CD4-positive, alpha-beta memory T cell (primary cell): ENCODE measurements at regions of chr7 and their contacts with region 1.

Region 1: GRCh38 chr7:2471396-2471795 is 4.8 kb downstream of the GRIFIN start:
- DNase-seq: no peak
- H3K4me3 ChIP-seq: no peak overlapping the region
- H3K4me3 Mint-ChIP-seq: no peak overlapping the region
- H3K27ac ChIP-seq: no peak overlapping the region
- H3K27ac Mint-ChIP-seq: no peak overlapping the region
- H3K4me1 ChIP-seq: no peaks in the 10 kb centered on the region
- H3K4me1 Mint-ChIP-seq: peaks cover 2 to 5% (median 4%) of the 10 kb centered on the region in 4 donors
- H3K27me3 ChIP-seq: no peaks in the 10 kb centered on the region
- H3K27me3 Mint-ChIP-seq: peaks cover 2 to 5% of the 10 kb centered on the region in 2 donors

Region 2: DNA sequence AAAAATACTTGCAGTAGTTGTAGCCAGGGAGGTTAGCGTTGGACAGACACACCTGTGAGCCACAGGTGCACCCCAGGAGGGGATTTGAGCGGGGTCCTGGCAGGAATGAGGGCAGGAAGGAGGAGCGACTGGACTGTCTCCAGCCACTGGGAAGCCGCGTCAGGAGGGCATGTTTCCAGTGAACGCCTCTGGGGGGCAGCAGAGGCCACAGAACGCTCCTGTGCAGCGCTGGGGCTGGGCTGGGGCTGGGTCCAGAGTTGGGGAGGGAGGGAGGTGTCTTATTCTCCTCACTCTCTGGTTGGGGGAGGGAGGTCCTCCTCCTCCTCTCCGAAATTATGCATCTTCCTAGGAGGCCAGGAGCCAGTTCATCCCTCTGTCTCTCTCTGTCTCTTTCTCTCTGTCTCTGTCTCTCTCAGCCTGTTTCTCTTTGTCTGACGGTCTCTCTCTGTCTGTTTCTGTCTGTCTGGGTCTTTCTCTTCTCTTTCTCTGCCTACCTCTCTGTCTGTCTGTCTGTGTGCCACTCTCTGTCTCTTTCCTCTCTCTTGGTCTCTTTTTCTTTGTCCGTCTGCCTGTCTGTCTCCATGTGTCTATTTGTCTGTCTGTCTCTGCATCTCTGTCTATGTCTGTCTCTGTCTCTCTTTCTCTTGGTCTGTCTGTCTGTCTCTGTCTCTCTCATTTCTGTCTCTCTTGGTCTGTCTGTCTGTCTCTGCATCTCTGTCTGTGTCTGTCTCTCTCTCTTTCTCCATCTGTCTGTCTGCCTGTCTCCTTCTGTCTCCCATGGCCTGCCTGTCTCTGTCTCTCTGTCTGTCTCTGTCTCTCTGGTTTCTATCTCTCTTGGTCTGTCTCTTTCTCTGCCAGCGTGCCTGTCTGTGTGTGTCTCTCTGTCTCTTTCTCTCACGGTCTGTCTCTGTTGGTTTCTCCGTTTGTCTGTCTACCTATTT is 891.6 kb before region 1 on chr7:
- CTCF ChIA-PET with region 1: interaction called, 4 read pairs
- POLR2A ChIA-PET with region 1: no interaction called
- intact Hi-C with region 1: loop called (anchors 1 kb)
- DNase-seq: peak; percentile 54 to 63 (median 58)
- H3K4me3 ChIP-seq: no peak overlapping the region
- H3K4me3 Mint-ChIP-seq: peak overlapping the region in 1 of 8 donors; percentile 21
- H3K27ac ChIP-seq: no peak overlapping the region
- H3K27ac Mint-ChIP-seq: peak overlapping the region in 3 of 7 donors; percentile 51 to 84 (median 72)
- H3K4me1 ChIP-seq: peaks cover 7% of the 10 kb centered on the region
- H3K4me1 Mint-ChIP-seq: peaks cover 10 to 16% (median 12%) of the 10 kb centered on the region in 4 donors
- H3K27me3 ChIP-seq: no peaks in the 10 kb centered on the region
- H3K27me3 Mint-ChIP-seq: no peaks in the 10 kb centered on the region

Region 3: DNA sequence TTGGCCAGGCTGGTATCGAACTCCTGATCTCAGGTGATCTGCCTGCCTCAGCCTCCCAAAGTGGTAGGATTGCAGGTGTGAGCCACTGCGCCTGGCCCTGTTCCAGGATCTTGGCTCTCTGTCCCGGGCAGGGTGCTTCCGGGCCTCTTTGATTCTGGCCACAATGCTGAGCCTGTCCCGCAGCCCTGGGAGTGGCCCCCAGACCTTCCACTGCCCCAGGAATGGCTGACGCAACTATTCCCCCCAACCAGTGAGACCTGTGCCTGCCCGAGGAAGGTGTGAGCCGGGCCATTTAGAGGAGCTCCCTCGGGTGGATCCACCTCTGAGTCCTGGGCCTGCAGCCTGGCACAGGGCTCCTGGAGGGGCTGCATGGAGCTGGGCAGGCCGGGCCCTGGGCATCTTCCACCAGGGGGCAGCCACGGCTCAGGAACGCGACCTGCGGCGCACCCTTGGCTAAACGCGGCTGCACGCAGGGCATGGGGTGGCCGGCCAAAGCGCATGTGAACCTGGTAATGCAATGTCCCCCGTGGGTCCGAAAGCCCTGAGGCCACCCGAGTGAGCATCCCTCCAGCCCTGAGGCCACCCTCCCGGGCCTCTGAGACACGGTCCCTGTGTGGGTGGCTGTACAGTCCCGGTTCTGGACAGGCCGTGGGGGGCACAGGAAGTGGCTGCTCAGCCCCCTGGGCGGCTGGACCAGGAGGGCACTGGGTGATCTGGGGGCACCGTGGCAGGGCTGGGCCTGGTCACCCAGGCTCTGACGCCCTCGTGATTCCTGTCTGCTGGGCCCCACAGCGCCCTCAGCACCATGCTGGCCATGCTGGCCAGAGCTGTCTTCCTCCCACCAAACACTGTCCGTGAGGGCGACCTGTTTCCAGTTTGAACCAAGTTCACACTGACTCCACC is 20.0 kb before region 1 on chr7:
- CTCF ChIA-PET with region 1: interaction called, 79 read pairs
- POLR2A ChIA-PET with region 1: no interaction called
- intact Hi-C with region 1: loop called (anchors 1 kb)
- DNase-seq: peak; percentile 60 to 68 (median 64)
- H3K4me3 ChIP-seq: peak overlapping the region in 1 of 2 donors; percentile 32
- H3K4me3 Mint-ChIP-seq: peak overlapping the region in 6 of 8 donors; percentile 15 to 67 (median 52)
- H3K27ac ChIP-seq: no peak overlapping the region
- H3K27ac Mint-ChIP-seq: peak overlapping the region in 1 of 7 donors; percentile 46
- H3K4me1 ChIP-seq: peaks cover 10% of the 10 kb centered on the region
- H3K4me1 Mint-ChIP-seq: peaks cover 0 to 9% (median 5%) of the 10 kb centered on the region in 4 donors
- H3K27me3 ChIP-seq: no peaks in the 10 kb centered on the region
- H3K27me3 Mint-ChIP-seq: no peaks in the 10 kb centered on the region

Region 4: GRCh38 chr7:2460188-2460587 is 11.2 kb before region 1 on chr7:
- CTCF ChIA-PET with region 1: interaction called, 14 read pairs
- POLR2A ChIA-PET with region 1: no interaction called
- intact Hi-C with region 1: no loop called
- DNase-seq: no peak
- H3K4me3 ChIP-seq: no peak overlapping the region
- H3K4me3 Mint-ChIP-seq: no peak overlapping the region
- H3K27ac ChIP-seq: no peak overlapping the region
- H3K27ac Mint-ChIP-seq: no peak overlapping the region
- H3K4me1 ChIP-seq: peaks cover 8% of the 10 kb centered on the region
- H3K4me1 Mint-ChIP-seq: peaks cover 3 to 9% (median 7%) of the 10 kb centered on the region in 4 donors
- H3K27me3 ChIP-seq: no peaks in the 10 kb centered on the region
- H3K27me3 Mint-ChIP-seq: peaks cover 0 to 4% of the 10 kb centered on the region in 2 donors